CD14-positive monocyte (primary cell): ENCODE measurements at regions of chr7 and their contacts with region 1.

Region 1: GRCh38 chr7:93150200-93150835 is 2.1 kb upstream of the SAMD9L start:
- DNase-seq: peak in 2 of 3 donors; percentile 38 to 39
- H3K4me3 ChIP-seq: peak overlapping the region in 1 of 3 experiments; percentile 11
- H3K4me3 Mint-ChIP-seq: peak overlapping the region in 1 of 2 donors; percentile 4
- H3K27ac ChIP-seq: peak overlapping the region in 1 of 2 donors; percentile 85
- H3K27ac Mint-ChIP-seq: peak overlapping the region; percentile 69 to 90 (median 83)
- H3K4me1 ChIP-seq: peaks cover 48 to 63% of the 10 kb centered on the region in 2 donors
- H3K4me1 Mint-ChIP-seq: peaks cover 52% of the 10 kb centered on the region
- H3K27me3 ChIP-seq: no peaks in the 10 kb centered on the region
- H3K27me3 Mint-ChIP-seq: peaks cover 0 to 3% (median 0%) of the 10 kb centered on the region in 3 donors
- CTCF ChIP-seq: no peak

Region 2: GRCh38 chr7:93203487-93203886 is 53.2 kb after region 1 on chr7:
- intact Hi-C with region 1: no loop called
- DNase-seq: no peak
- H3K4me3 ChIP-seq: no peak overlapping the region
- H3K4me3 Mint-ChIP-seq: no peak overlapping the region
- H3K27ac ChIP-seq: no peak overlapping the region
- H3K27ac Mint-ChIP-seq: no peak overlapping the region
- H3K4me1 ChIP-seq: peaks cover 0 to 3% of the 10 kb centered on the region in 2 donors
- H3K4me1 Mint-ChIP-seq: peaks cover 4% of the 10 kb centered on the region
- H3K27me3 ChIP-seq: no peaks in the 10 kb centered on the region
- H3K27me3 Mint-ChIP-seq: peaks cover 0 to 7% (median 2%) of the 10 kb centered on the region in 3 donors
- CTCF ChIP-seq: no peak

Region 3: DNA sequence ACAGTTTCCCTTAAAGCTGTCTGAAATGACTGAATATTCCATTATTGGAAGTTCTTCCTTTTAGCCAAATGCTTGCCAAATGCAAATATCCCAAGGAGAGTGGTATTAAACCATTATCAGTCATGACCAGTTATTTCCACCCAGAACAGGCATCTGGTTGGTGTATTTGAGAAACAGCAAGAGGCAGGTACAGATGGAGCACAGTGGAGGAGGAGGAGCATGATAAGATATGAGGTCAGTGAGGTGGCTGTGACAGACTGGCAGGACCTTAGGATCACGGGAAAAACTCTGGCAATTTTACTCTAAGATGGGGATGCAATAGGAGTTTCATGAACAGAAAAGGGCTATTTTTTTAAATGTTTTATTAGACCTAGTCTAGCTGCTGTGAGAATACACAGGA is 69.5 kb after region 1 on chr7:
- intact Hi-C with region 1: loop called in 1 of 2 experiments (anchors 5 kb)
- DNase-seq: no peak
- H3K4me3 ChIP-seq: no peak overlapping the region
- H3K4me3 Mint-ChIP-seq: no peak overlapping the region
- H3K27ac ChIP-seq: no peak overlapping the region
- H3K27ac Mint-ChIP-seq: no peak overlapping the region
- H3K4me1 ChIP-seq: peaks cover 11 to 17% of the 10 kb centered on the region in 2 donors
- H3K4me1 Mint-ChIP-seq: no peaks in the 10 kb centered on the region
- H3K27me3 ChIP-seq: no peaks in the 10 kb centered on the region
- H3K27me3 Mint-ChIP-seq: peaks cover 0 to 3% (median under 1%) of the 10 kb centered on the region in 3 donors
- CTCF ChIP-seq: no peak